Heart left ventricle (tissue), 16 donors: ENCODE measurements at regions of chr12 and their contacts with region 1.

Region 1: DNA sequence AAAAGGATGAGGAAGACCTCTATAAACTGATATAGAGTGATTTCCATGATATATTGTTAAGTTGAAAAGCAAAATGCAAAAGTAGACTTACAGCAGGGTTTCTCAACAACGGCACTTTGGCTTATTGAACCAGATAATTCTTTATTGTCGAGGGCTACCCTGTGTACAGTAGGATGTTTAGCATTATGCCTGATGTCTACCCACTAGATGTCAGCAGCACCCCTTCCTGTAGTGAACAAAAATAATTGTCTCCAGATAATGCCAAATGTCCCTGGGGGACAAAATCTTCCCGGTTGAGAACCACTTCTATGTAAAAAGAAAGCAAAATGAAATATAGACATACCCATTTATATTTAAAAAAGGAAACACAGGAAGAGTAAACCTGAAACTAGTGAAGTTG is 32.4 kb downstream of the ABCD2 start:
- DNase-seq: no peak
- ATAC-seq: peak in 3 of 4 donors; percentile 62 to 75 (median 69)
- H3K4me3 ChIP-seq: no peak overlapping the region
- H3K27ac ChIP-seq: peak overlapping the region in 1 of 12 donors; percentile 30
- H3K4me1 ChIP-seq: peaks cover 0 to 6% (median 0%) of the 10 kb centered on the region in 12 donors
- H3K27me3 ChIP-seq: no peaks in the 10 kb centered on the region
- CTCF ChIP-seq: peak in 11 of 12 donors; percentile 29 to 64 (median 41)
- POLR2A ChIP-seq: no peak

Region 2: GRCh38 chr12:39682689-39683477 is 95.7 kb after region 1 on chr12:
- intact Hi-C with region 1: loop called in 2 of 10 experiments (anchors 10 kb)
- DNase-seq: no peak
- ATAC-seq: no peak
- H3K4me3 ChIP-seq: peak overlapping the region in 3 of 12 donors; percentile 6 to 19 (median 10)
- H3K27ac ChIP-seq: peak overlapping the region in 1 of 12 donors; percentile 18
- H3K4me1 ChIP-seq: no peaks in the 10 kb centered on the region
- H3K27me3 ChIP-seq: no peaks in the 10 kb centered on the region
- CTCF ChIP-seq: no peak
- POLR2A ChIP-seq: no peak

Region 3: DNA sequence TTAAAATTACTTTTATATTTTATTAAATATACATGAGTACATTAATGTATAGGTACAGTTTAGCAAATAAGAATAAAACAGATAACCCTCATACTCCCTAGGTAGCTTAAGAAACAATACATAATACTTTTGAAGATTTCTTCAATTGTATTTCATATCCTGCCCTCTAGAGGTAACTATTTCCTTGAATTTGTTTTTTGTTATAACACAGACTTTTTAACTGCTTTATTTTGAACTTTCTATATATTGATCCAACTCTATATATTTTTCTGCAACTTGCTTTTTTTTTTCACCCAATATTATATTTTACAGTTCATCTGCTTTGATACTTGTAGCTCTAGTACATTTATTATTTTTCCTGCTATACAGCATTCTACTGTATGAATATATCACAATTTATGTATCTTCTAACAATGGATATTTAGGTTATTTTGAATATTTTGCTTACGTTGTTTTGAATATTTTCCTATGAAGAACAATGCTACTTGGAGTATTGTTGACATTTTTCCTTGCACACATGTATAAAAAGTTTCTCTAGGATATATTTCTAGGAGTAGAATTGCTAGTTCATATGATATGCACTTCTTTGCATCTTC is 105.1 kb after region 1 on chr12:
- intact Hi-C with region 1: loop called in 9 of 10 experiments (anchors 2 to 10 kb)
- DNase-seq: no peak
- ATAC-seq: no peak
- H3K4me3 ChIP-seq: no peak overlapping the region
- H3K27ac ChIP-seq: no peak overlapping the region
- H3K4me1 ChIP-seq: no peaks in the 10 kb centered on the region
- H3K27me3 ChIP-seq: no peaks in the 10 kb centered on the region
- CTCF ChIP-seq: peak in 10 of 12 donors; percentile 22 to 55 (median 44)
- POLR2A ChIP-seq: no peak

Region 4: GRCh38 chr12:39990122-39991101 is 403.2 kb after region 1 on chr12:
- intact Hi-C with region 1: loop called in 1 of 10 experiments (anchors 5 kb)
- DNase-seq: peak in 4 of 5 donors; percentile 15 to 55 (median 40)
- ATAC-seq: peak in 3 of 4 donors; percentile 60 to 81 (median 64)
- H3K4me3 ChIP-seq: no peak overlapping the region
- H3K27ac ChIP-seq: no peak overlapping the region
- H3K4me1 ChIP-seq: peaks cover 0 to 4% (median 0%) of the 10 kb centered on the region in 12 donors
- H3K27me3 ChIP-seq: no peaks in the 10 kb centered on the region
- CTCF ChIP-seq: peak; percentile 68 to 90 (median 81)
- POLR2A ChIP-seq: no peak

Region 5: GRCh38 chr12:40010899-40011774 is 423.9 kb after region 1 on chr12:
- intact Hi-C with region 1: loop called in 1 of 10 experiments (anchors 10 kb)
- DNase-seq: peak in 3 of 5 donors; percentile 48 to 67 (median 56)
- ATAC-seq: peak; percentile 75 to 96 (median 94)
- H3K4me3 ChIP-seq: peak overlapping the region in 10 of 12 donors; percentile 13 to 48 (median 40)
- H3K27ac ChIP-seq: peak overlapping the region in 9 of 12 donors; percentile 6 to 56 (median 35)
- H3K4me1 ChIP-seq: peaks cover 0 to 23% (median 17%) of the 10 kb centered on the region in 12 donors
- H3K27me3 ChIP-seq: no peaks in the 10 kb centered on the region
- CTCF ChIP-seq: peak; percentile 70 to 91 (median 84)
- POLR2A ChIP-seq: no peak